ENCODE measurements at regions of chrX and their contacts with region 1.

Region 1: DNA sequence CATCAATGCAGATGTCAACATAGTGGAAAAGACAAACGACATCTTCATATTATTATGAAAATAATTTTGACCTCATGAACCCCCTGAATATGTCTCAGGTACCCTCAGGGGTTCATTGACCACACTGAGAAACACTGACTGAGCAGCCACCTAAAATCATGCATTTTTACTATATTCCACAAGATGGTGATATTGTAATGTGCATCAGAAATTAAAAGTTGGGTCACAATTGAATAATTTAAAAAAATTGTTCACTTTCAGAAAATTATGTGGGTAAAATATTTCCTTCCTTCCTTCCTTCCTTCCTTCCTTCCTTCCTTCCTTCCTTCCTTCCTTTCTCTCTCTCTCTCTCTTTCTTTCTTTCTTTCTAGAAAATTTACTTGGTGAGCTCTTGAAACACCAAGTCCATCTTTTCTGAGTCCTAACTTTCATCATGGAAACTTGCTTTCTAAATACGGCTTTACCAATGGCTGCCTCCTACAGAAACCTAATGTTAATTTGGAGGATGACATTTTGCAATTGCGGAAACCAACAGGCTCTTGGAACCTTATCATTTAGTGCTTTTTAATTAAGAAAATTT is 103.6 kb downstream of the RTL3 start:
- DNase-seq: no peak
- H3K4me3 ChIP-seq: no peak overlapping the region
- H3K27ac ChIP-seq: no peak overlapping the region
- H3K4me1 ChIP-seq: no peaks in the 10 kb centered on the region
- H3K27me3 ChIP-seq: no peaks in the 10 kb centered on the region
- CTCF ChIP-seq: peak in 1 of 3 donors; percentile 36
- POLR2A ChIP-seq: no peak

Region 2: DNA sequence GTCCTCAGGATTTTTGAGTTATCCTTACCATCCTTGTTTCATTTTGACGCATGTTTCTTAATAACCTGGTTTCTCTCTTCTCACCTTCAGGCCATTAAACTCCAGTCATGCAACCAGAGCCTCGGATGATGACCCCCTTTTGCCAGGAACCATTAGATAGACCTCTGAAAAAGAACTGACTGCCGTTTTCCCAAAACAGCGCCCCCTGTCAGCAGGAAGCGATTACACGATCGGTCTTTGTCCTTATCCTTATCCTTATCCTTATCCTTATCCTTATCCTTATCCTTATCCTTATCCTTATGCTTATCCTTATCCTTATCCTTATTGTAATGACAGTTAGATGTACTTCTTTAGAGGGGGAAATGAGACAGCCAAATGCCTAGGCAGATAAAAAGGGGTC is 960.0 kb after region 1 on chrX:
- intact Hi-C with region 1: loop called (anchors 5 kb)
- DNase-seq: no peak
- H3K4me3 ChIP-seq: no peak overlapping the region
- H3K27ac ChIP-seq: no peak overlapping the region
- H3K4me1 ChIP-seq: no peaks in the 10 kb centered on the region
- H3K27me3 ChIP-seq: peaks cover 0 to 21% of the 10 kb centered on the region in 2 donors
- CTCF ChIP-seq: no peak
- POLR2A ChIP-seq: no peak